B cell (primary cell): ENCODE measurements at regions of chr3 and their contacts with region 1.

Region 1: DNA sequence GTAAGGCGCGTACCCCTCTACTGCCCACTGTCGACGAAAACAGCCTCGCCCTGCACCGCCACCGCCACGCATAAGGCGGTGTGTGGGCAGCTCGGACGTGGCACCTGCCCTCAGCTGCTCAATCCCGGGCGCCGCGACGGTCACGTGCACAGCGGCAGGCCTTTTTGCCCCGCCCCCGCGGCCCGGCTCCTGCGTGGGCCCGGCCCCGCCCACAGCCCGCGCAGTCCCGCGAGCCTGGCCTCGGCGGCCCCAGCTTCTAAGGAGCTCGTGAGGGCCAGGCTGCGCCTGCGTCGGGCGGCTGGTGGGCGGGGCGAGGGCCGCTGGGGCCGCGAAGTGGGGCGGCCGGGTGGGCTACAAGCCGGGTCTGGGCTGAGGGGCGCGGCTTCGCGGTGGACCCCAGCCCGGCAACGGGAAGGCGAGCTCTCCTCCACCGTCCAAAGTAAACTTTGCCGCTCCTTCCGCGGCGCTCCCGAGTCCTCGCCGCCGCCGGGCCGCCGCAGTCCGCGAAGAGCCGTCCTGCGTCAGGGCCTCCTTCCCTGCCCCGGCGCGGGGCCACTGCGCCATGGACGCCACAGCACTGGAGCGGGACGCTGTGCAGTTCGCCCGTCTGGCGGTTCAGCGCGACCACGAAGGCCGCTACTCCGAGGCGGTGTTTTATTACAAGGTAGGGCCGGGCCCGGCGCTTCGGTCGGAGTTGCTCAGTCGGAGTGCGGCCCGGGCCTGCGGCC is at the start of gene CAPN7:
- DNase-seq: peak; percentile 97
- ATAC-seq: peak; percentile 89
- H3K4me3 ChIP-seq: peak within 1 kb of the TSS; percentile 71 to 95 (median 78)
- H3K4me3 Mint-ChIP-seq: peak within 1 kb of the TSS; percentile 94
- H3K27ac ChIP-seq: peak within 1 kb of the TSS; percentile 68 to 93
- H3K27ac Mint-ChIP-seq: peak within 1 kb of the TSS; percentile 93
- H3K4me1 ChIP-seq: peaks cover 16 to 19% of the 10 kb centered on the region in 2 donors
- H3K4me1 Mint-ChIP-seq: peaks cover 25% of the 10 kb centered on the region
- H3K27me3 ChIP-seq: no peaks in the 10 kb centered on the region
- H3K27me3 Mint-ChIP-seq: no peaks in the 10 kb centered on the region
- CTCF ChIP-seq: no peak
- total RNA-seq, gene CAPN7: 85.9 and 95.5 TPM in 2 replicates

Region 2: GRCh38 chr3:14461748-14462324 is 744.3 kb before region 1 on chr3:
- CTCF ChIA-PET with region 1: no interaction called
- POLR2A ChIA-PET with region 1: no interaction called
- intact Hi-C with region 1: no loop called
- DNase-seq: peak; percentile 62
- ATAC-seq: peak; percentile 71
- H3K4me3 ChIP-seq: no peak overlapping the region
- H3K4me3 Mint-ChIP-seq: no peak overlapping the region
- H3K27ac ChIP-seq: no peak overlapping the region
- H3K27ac Mint-ChIP-seq: no peak overlapping the region
- H3K4me1 ChIP-seq: no peaks in the 10 kb centered on the region
- H3K4me1 Mint-ChIP-seq: no peaks in the 10 kb centered on the region
- H3K27me3 ChIP-seq: no peaks in the 10 kb centered on the region
- H3K27me3 Mint-ChIP-seq: no peaks in the 10 kb centered on the region
- CTCF ChIP-seq: peak; percentile 49

Region 3: DNA sequence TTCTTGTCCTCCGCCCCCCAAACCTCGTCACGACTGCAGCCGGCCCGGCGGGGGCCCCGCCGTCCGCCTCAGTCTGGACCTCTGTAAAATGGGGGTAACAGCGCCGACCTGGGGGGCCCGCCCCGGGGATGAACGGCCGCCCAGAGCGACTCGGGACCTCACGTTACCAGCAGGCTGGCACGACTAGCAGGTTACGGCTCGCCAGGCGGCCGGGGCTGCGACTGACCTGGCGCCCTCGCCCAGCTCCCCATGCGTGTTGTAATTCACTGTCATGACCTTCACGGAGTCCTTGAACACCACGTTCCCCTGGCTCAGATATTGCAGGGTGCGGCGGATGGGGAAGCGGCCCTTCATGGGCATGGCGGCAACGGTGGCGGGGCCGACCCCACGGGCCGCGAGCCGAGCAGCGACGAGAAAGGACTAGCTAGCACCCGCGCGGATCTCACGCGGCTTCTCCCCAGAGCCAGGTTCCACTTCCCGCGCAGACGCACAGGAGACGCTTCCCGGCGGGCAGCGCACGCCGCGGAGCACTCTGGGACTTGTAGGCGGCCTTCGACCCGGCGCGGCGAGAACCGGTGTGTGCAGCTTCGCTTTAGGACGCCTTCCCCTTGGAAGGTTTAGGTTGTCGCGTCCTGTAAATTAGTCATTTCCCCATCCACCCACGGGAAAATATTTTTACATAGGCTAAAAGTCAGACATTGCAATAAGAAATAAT is 141.1 kb before region 1 on chr3 and contains the start of gene MRPS25:
- CTCF ChIA-PET with region 1: no interaction called
- POLR2A ChIA-PET with region 1: no interaction called
- intact Hi-C with region 1: loop called (anchors 1 kb)
- DNase-seq: peak; percentile 92
- ATAC-seq: peak; percentile 98
- H3K4me3 ChIP-seq: peak within 1 kb of the TSS; percentile 36 to 93 (median 79)
- H3K4me3 Mint-ChIP-seq: peak within 1 kb of the TSS; percentile 100
- H3K27ac ChIP-seq: peak within 1 kb of the TSS; percentile 66 to 89
- H3K27ac Mint-ChIP-seq: peak within 1 kb of the TSS; percentile 98
- H3K4me1 ChIP-seq: peaks cover 18 to 23% of the 10 kb centered on the region in 2 donors
- H3K4me1 Mint-ChIP-seq: peaks cover 23% of the 10 kb centered on the region
- H3K27me3 ChIP-seq: no peaks in the 10 kb centered on the region
- H3K27me3 Mint-ChIP-seq: no peaks in the 10 kb centered on the region
- CTCF ChIP-seq: no peak
- total RNA-seq, gene MRPS25: 105 and 108 TPM in 2 replicates

Region 4: GRCh38 chr3:15217841-15218267 is 11.8 kb after region 1 on chr3:
- CTCF ChIA-PET with region 1: interaction called, 15 read pairs
- POLR2A ChIA-PET with region 1: interaction called, 5 read pairs
- intact Hi-C with region 1: no loop called
- DNase-seq: no peak
- ATAC-seq: no peak
- H3K4me3 ChIP-seq: no peak overlapping the region
- H3K4me3 Mint-ChIP-seq: no peak overlapping the region
- H3K27ac ChIP-seq: no peak overlapping the region
- H3K27ac Mint-ChIP-seq: no peak overlapping the region
- H3K4me1 ChIP-seq: peaks cover 7 to 9% of the 10 kb centered on the region in 2 donors
- H3K4me1 Mint-ChIP-seq: peaks cover 25% of the 10 kb centered on the region
- H3K27me3 ChIP-seq: no peaks in the 10 kb centered on the region
- H3K27me3 Mint-ChIP-seq: no peaks in the 10 kb centered on the region
- CTCF ChIP-seq: no peak

Region 5: GRCh38 chr3:15399970-15400369 is 193.9 kb after region 1 on chr3:
- CTCF ChIA-PET with region 1: interaction called, 305 read pairs
- POLR2A ChIA-PET with region 1: interaction called, 3 read pairs
- intact Hi-C with region 1: loop called (anchors 1 kb)
- DNase-seq: no peak
- ATAC-seq: no peak
- H3K4me3 ChIP-seq: no peak overlapping the region
- H3K4me3 Mint-ChIP-seq: no peak overlapping the region
- H3K27ac ChIP-seq: no peak overlapping the region
- H3K27ac Mint-ChIP-seq: no peak overlapping the region
- H3K4me1 ChIP-seq: peaks cover 24 to 31% of the 10 kb centered on the region in 2 donors
- H3K4me1 Mint-ChIP-seq: peaks cover 39% of the 10 kb centered on the region
- H3K27me3 ChIP-seq: no peaks in the 10 kb centered on the region
- H3K27me3 Mint-ChIP-seq: no peaks in the 10 kb centered on the region
- CTCF ChIP-seq: no peak

Region 6: GRCh38 chr3:15557511-15557946 is 351.4 kb after region 1 on chr3:
- CTCF ChIA-PET with region 1: interaction called, 70 read pairs
- POLR2A ChIA-PET with region 1: no interaction called
- intact Hi-C with region 1: loop called (anchors 1 kb)
- DNase-seq: peak; percentile 82
- ATAC-seq: peak; percentile 73
- H3K4me3 ChIP-seq: no peak overlapping the region
- H3K4me3 Mint-ChIP-seq: no peak overlapping the region
- H3K27ac ChIP-seq: peak overlapping the region in 1 of 2 donors; percentile 78
- H3K27ac Mint-ChIP-seq: no peak overlapping the region
- H3K4me1 ChIP-seq: peaks cover 23 to 30% of the 10 kb centered on the region in 2 donors
- H3K4me1 Mint-ChIP-seq: peaks cover 29% of the 10 kb centered on the region
- H3K27me3 ChIP-seq: no peaks in the 10 kb centered on the region
- H3K27me3 Mint-ChIP-seq: no peaks in the 10 kb centered on the region
- CTCF ChIP-seq: peak; percentile 80

Region 7: DNA sequence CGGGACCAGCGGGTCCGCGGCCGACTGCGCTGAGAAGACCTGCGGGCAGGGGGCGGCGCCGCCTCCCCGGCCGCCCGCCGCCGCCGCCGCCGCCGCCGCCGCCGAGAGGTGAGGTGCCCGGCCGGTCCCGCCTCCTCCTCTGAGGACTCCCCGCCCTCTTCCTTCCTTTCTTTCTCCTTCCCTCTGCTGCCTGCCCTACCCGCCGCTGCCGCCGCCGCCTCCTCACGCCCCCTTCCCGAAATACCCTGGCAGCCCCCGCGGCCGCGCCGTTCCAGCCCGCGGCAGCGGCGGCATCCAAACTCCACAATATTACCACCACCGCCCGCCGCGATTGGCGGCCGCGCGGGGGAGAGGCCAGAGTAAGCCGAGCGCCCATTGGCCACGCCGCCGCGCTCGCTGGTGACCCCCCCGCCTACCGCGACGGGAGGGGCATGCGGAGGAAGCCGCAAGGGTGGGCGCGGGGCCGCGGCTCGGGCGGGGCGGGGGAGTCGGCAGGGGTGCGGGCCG is 653.5 kb after region 1 on chr3:
- CTCF ChIA-PET with region 1: no interaction called
- POLR2A ChIA-PET with region 1: no interaction called
- intact Hi-C with region 1: loop called (anchors 5 kb)
- DNase-seq: peak; percentile 86
- ATAC-seq: peak; percentile 76
- H3K4me3 ChIP-seq: peak overlapping the region in 4 of 5 experiments; percentile 66 to 87 (median 81)
- H3K4me3 Mint-ChIP-seq: peak overlapping the region; percentile 86
- H3K27ac ChIP-seq: peak overlapping the region; percentile 73 to 87
- H3K27ac Mint-ChIP-seq: peak overlapping the region; percentile 97
- H3K4me1 ChIP-seq: peaks cover 10 to 16% of the 10 kb centered on the region in 2 donors
- H3K4me1 Mint-ChIP-seq: peaks cover 24% of the 10 kb centered on the region
- H3K27me3 ChIP-seq: no peaks in the 10 kb centered on the region
- H3K27me3 Mint-ChIP-seq: no peaks in the 10 kb centered on the region
- CTCF ChIP-seq: no peak